ENCODE measurements at regions of chr12 and their contacts with region 1.

Region 1: DNA sequence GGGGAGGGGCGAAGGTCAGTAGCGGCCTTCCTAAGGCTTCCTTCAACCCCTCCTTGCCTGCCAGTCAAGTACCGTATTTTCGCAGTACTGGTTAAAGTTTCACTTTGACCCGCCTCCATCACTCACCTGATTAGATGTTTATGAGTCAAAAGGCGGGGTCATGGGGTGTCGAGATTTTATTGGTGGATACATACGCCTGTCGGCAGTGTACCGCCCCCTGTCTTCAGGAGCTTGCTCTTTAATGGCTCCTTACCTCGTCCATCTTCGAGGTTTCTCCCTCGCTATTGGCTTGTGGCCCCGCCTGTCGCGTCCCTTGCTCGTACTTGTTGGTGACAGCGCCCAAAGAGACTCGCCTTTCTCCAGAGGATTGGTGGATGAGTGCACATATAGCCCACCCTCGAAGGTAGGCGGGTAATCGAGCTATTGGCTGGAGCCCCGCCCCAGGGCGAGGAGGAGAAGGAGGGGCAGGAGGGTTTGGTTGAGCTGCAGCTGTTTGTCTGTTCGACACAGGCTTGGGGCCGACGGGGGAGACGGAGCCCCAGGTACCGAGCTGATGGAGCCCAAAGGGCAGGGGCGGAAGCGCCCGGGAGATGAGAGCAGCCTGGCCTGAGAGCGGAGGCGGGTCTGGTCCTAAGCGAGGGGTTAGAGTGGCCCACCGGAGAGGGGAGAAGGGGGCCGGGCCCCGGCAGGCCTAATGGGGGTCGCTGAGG is at the start of gene RAB5B:
- DNase-seq: peak; percentile 89 to 100 (median 98)
- ATAC-seq: peak; percentile 90
- H3K4me3 Mint-ChIP-seq: no peak within 1 kb of the TSS
- H3K27ac Mint-ChIP-seq: no peak within 1 kb of the TSS
- H3K4me1 Mint-ChIP-seq: peaks cover 10 to 28% (median 24%) of the 10 kb centered on the region in 4 donors
- H3K27me3 Mint-ChIP-seq: no peaks in the 10 kb centered on the region
- polyA plus RNA-seq, gene RAB5B: 61.6 to 69.4 (median 65.9) TPM

Region 2: GRCh38 chr12:55738123-55739024 is 235.4 kb before region 1 on chr12:
- POLR2A ChIA-PET with region 1: interaction called, 11 read pairs
- DNase-seq: peak; percentile 48 to 91 (median 80)
- ATAC-seq: peak; percentile 65 to 80
- H3K4me3 Mint-ChIP-seq: peak overlapping the region; percentile 82 to 95 (median 93)
- H3K27ac Mint-ChIP-seq: peak overlapping the region; percentile 77 to 98 (median 95)
- H3K4me1 Mint-ChIP-seq: peaks cover 16 to 32% (median 26%) of the 10 kb centered on the region in 4 donors
- H3K27me3 Mint-ChIP-seq: no peaks in the 10 kb centered on the region

Region 3: GRCh38 chr12:55829967-55830600 is 143.7 kb before region 1 on chr12:
- POLR2A ChIA-PET with region 1: interaction called, 33 read pairs
- DNase-seq: peak; percentile 15 to 71 (median 42)
- ATAC-seq: peak; percentile 21 to 36
- H3K4me3 Mint-ChIP-seq: peak overlapping the region; percentile 94 to 99 (median 98)
- H3K27ac Mint-ChIP-seq: peak overlapping the region; percentile 85 to 99 (median 96)
- H3K4me1 Mint-ChIP-seq: peaks cover 37 to 63% (median 59%) of the 10 kb centered on the region in 4 donors
- H3K27me3 Mint-ChIP-seq: no peaks in the 10 kb centered on the region

Region 4: DNA sequence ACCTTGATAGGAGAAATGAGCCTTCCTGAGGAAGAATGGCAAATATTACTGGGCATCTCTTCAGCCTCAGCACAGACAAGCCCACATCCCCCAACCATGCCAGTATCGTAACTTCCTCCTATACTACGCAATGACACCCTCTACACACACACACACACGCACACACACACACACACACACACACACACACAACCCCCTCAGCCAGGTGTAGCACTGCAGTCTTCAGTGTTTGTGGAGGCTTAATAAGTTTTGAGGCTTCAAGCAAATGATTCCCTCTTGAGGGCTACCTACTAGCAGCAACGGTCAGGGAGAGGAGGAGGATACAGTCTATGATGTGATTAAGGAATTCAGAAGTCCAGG is 41.2 kb before region 1 on chr12:
- POLR2A ChIA-PET with region 1: interaction called, 50 read pairs
- DNase-seq: peak in 9 of 10 donors; percentile 31 to 78 (median 53)
- ATAC-seq: peak in 1 of 2 donors; percentile 22
- H3K4me3 Mint-ChIP-seq: peak overlapping the region; percentile 93 to 100 (median 98)
- H3K27ac Mint-ChIP-seq: peak overlapping the region; percentile 92 to 99 (median 98)
- H3K4me1 Mint-ChIP-seq: peaks cover 49 to 87% (median 66%) of the 10 kb centered on the region in 4 donors
- H3K27me3 Mint-ChIP-seq: no peaks in the 10 kb centered on the region

Region 5: GRCh38 chr12:55996715-55997534 is 23.2 kb after region 1 on chr12 and contains the start of gene SUOX:
- POLR2A ChIA-PET with region 1: interaction called, 12 read pairs
- DNase-seq: peak in 1 of 10 donors; percentile 25
- ATAC-seq: peak; percentile 30 to 40
- H3K4me3 Mint-ChIP-seq: peak within 1 kb of the TSS; percentile 43 to 79 (median 67)
- H3K27ac Mint-ChIP-seq: peak within 1 kb of the TSS in 9 of 10 donors; percentile 24 to 78 (median 53)
- H3K4me1 Mint-ChIP-seq: peaks cover 13 to 26% (median 22%) of the 10 kb centered on the region in 4 donors
- H3K27me3 Mint-ChIP-seq: peaks cover 0 to 14% (median 0%) of the 10 kb centered on the region in 5 donors
- polyA plus RNA-seq, gene SUOX: 0.10 to 0.58 TPM in 2 of 3 donors, not detected in the other

Region 6: GRCh38 chr12:56127888-56128669 is 154.3 kb after region 1 on chr12 and contains the start of gene ESYT1:
- POLR2A ChIA-PET with region 1: interaction called, 12 read pairs
- DNase-seq: peak; percentile 86 to 100 (median 98)
- ATAC-seq: peak; percentile 83 to 90
- H3K4me3 Mint-ChIP-seq: peak within 1 kb of the TSS; percentile 97 to 100 (median 99)
- H3K27ac Mint-ChIP-seq: peak within 1 kb of the TSS; percentile 90 to 99 (median 96)
- H3K4me1 Mint-ChIP-seq: peaks cover 32 to 78% (median 60%) of the 10 kb centered on the region in 4 donors
- H3K27me3 Mint-ChIP-seq: no peaks in the 10 kb centered on the region
- polyA plus RNA-seq, gene ESYT1: 354 to 433 (median 357) TPM